Cardiac septum (tissue), 1 donor: ENCODE measurements at regions of chr7 and their contacts with region 1.

Region 1: DNA sequence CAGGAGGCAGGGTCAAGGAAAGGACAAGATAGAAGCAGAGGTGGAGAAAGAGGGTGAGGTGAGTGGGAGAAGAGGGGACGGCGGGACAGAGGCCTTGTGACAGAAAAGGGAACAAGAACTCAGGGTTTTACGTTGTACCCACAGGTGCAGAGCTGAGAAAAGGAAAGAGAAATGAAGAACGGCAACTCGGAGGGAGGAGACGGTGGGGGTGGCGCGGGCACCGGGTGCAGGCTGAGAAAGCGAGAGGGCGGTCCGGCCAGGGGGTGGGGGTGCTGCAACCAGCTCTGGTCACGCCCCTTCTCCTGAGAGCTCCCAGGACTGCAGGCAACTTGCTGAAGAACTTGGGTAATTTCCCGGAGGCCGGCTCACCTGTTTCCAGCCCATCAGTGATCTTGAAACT is 65.3 kb downstream of the CARD11 start:
- DNase-seq: no peak

Region 2: DNA sequence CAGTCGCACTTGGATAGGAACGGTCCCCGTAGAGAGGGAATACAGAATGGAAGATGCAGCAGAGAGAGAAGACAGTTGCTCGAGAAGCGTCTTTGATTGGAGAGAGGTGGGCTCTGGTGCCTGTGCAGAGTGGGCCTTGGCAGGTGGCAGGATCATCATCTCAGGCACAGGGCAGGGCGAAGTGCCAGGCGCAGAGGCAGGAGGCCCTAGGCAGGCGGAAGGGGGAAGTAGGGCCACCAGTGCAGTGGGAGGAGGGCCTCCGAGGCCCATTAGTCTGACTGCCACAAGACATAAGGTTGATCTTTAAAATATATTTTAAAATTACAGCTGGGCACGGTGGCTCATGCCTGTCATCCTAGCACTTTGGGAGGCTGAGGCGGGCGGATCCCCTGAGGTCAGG is 55.2 kb after region 1 on chr7:
- intact Hi-C with region 1: loop called (anchors 10 kb)
- DNase-seq: peak; percentile 51